Stomach (tissue), 19 donors: ENCODE measurements at regions of chr3 and their contacts with region 1.

Region 1: DNA sequence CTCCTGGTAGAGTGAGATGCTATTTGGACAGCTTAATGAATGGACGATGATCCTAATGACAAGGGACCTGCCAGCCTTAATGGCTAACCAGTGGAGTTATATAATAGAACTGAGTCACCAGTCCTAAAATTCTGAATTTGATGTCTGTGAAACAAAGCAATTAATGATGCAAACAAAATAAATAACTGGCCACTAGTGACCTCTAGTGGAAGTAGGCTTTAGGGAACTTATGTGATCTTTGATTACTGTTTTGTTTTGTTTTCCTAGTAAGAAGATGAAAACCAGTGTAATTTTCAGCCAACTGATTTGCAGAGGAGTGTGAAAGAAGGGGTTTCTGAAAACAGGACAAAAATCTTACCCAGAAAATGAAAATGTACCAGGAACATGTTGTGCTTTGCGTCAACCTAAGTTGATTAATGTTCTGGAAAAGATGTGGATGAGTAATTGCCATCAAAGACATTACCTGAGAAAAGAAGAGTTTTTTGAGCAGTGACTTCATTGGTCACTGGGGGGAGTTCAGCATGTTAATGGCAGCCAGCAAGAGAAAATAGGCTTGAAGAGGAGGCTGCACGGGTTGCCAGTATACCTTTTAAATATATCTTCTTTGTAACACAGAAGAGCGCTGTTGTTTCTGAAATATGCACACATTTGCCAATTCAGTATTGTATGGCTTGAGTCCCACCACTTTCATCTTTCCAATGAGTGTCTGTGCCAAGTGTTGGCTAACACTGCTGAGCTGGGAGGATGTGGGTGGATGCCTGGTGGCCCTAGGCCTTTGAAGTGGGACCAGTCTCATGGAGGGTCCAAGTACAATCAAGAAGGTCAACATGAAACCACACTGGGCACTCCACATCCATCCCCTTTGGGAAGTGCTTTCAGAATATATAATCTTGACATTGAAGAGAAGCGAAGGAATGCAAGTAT is 9.3 kb downstream of the VEPH1 start:
- DNase-seq: peak in 1 of 2 donors; percentile 75
- H3K4me3 ChIP-seq: no peak overlapping the region
- H3K27ac ChIP-seq: no peak overlapping the region
- H3K4me1 ChIP-seq: peaks cover 0 to 6% (median 0%) of the 10 kb centered on the region in 4 donors
- H3K27me3 ChIP-seq: no peaks in the 10 kb centered on the region
- CTCF ChIP-seq: peak in 4 of 7 experiments; percentile 43 to 56 (median 45)
- EP300 ChIP-seq: no peak
- POLR2A ChIP-seq: no peak

Region 2: GRCh38 chr3:157201648-157202278 is 292.1 kb before region 1 on chr3:
- intact Hi-C with region 1: loop called (anchors 10 kb)
- DNase-seq: peak in 1 of 2 donors; percentile 54
- H3K4me3 ChIP-seq: no peak overlapping the region
- H3K27ac ChIP-seq: no peak overlapping the region
- H3K4me1 ChIP-seq: peaks cover 0 to 9% (median 4%) of the 10 kb centered on the region in 4 donors
- H3K27me3 ChIP-seq: no peaks in the 10 kb centered on the region
- CTCF ChIP-seq: peak in 5 of 7 experiments; percentile 10 to 53 (median 42)
- EP300 ChIP-seq: no peak
- POLR2A ChIP-seq: no peak

Region 3: GRCh38 chr3:157375342-157375986 is 118.4 kb before region 1 on chr3:
- intact Hi-C with region 1: no loop called
- DNase-seq: peak in 1 of 2 donors; percentile 16
- H3K4me3 ChIP-seq: no peak overlapping the region
- H3K27ac ChIP-seq: no peak overlapping the region
- H3K4me1 ChIP-seq: peaks cover 0 to 1% (median 0%) of the 10 kb centered on the region in 4 donors
- H3K27me3 ChIP-seq: no peaks in the 10 kb centered on the region
- CTCF ChIP-seq: no peak
- EP300 ChIP-seq: no peak
- POLR2A ChIP-seq: no peak